Left cardiac atrium (tissue), 4 donors: ENCODE measurements at regions of chr5 and their contacts with region 1.

Region 1: DNA sequence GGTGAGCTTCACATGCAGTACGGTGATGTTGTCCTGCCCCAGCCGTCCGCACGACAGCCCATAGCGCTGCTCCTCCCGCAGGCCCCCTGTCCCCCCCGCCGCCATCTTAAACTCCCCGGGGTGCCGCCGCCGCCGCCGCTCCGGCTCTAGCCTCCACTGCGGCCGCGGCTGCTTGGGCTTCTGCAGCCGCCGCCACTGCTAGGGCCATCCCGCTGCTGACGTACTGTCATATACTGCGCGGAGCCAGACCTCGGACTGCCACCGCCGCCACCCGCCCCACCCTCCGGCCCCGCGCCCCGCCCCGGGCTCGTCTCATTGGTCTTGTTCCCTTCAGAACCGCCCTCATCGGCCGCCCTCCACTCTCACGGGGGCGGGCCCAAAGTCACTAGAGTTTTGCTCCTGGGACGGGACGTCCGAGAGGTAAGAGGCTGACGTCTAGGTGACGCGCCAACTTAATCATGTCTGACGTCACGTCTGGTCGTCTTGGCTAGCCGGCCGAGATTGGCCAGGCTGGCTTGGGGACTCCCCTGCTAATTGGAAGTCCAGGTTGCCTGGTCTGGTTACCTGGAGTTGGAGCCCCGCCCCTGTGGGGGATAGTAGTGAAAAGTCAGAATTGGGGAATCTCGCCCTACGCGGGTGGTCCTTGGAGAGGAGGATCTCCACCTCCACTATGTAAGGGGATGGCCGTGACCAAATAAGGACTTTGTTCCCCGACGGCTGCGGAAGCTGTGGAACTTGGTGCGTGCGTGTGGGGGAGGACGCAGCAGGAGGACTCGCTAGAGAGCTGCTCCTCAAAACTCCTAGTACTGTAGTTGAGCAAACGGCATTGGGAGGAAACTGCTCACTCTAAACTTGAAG is at the start of gene ELL2:
- DNase-seq: peak; percentile 99
- ATAC-seq: peak; percentile 91 to 93
- total RNA-seq, gene ELL2: 39.1 to 77.7 TPM

Region 2: GRCh38 chr5:95858661-95859326 is 103.1 kb before region 1 on chr5:
- intact Hi-C with region 1: loop called in 1 of 2 experiments (anchors 5 kb)
- DNase-seq: peak; percentile 92
- ATAC-seq: peak; percentile 75 to 80

Region 3: GRCh38 chr5:95883613-95884325 is 78.1 kb before region 1 on chr5:
- intact Hi-C with region 1: no loop called
- DNase-seq: no peak
- ATAC-seq: peak; percentile 25 to 62

Region 4: GRCh38 chr5:95900383-95900958 is 61.4 kb before region 1 on chr5:
- intact Hi-C with region 1: loop called in 1 of 2 experiments (anchors 10 kb)
- DNase-seq: no peak
- ATAC-seq: peak; percentile 85 to 88